ENCODE measurements at regions of chr1 and their contacts with region 1.

Region 1: GRCh38 chr1:46401964-46402626 is 8.0 kb downstream of the FAAH start:
- DNase-seq: peak; percentile 45 to 87
- ATAC-seq: peak; percentile 64 to 92 (median 82)
- H3K4me3 ChIP-seq: peak overlapping the region; percentile 30
- H3K27ac ChIP-seq: peak overlapping the region; percentile 60
- H3K4me1 ChIP-seq: peaks cover 29% of the 10 kb centered on the region
- H3K27me3 ChIP-seq: no peaks in the 10 kb centered on the region
- CTCF ChIP-seq: no peak

Region 2: DNA sequence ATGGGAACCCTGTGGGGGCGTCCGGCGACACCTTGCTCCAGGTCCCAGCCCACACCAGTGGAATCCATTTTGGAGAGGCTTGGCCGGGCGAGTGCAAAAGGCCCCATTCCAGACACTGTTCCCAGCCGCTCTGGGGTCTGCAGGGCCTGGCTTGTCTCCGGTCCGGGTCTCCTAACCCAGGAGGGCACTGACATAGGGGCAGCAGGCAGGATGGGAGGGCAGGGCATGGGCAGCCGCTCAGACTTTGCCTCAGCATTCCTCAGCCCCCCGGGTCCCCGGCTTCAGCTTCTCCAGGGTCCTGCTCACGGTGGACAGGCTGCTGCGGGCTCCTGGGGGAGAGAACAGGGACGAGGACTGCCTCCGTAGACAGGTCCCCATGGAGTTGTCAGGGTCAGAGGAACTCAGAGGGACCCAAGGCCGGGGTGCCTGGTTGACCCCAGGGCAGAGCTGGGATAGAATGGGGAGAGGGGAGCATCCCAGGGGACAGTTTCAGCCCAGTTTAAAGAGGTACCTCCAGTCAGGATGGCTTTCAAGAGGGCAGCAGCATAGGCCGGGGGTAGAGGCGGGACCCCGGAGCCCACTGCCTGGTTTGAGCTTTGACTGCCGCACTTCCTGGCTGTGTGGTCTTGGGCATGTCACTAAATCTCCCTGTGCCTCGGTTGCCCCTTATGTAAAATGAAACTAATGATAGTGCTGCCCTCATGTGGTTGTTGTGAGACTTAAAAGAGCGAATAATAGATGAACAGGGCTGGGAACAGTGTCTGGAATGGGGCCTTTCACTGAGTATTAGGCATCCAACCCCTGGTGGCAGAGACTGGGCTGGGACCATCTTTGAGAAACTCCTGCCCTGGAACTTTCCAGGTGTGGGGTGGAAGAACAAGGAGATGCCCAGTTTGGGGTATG is 145.6 kb after region 1 on chr1:
- intact Hi-C with region 1: loop called in 1 of 2 experiments (anchors 5 kb)
- DNase-seq: peak in 1 of 2 donors; percentile 41
- ATAC-seq: peak; percentile 31 to 72 (median 48)
- H3K4me3 ChIP-seq: no peak overlapping the region
- H3K27ac ChIP-seq: no peak overlapping the region
- H3K4me1 ChIP-seq: no peaks in the 10 kb centered on the region
- H3K27me3 ChIP-seq: peaks cover 0 to 29% (median 13%) of the 10 kb centered on the region in 3 donors
- CTCF ChIP-seq: peak; percentile 37

Region 3: DNA sequence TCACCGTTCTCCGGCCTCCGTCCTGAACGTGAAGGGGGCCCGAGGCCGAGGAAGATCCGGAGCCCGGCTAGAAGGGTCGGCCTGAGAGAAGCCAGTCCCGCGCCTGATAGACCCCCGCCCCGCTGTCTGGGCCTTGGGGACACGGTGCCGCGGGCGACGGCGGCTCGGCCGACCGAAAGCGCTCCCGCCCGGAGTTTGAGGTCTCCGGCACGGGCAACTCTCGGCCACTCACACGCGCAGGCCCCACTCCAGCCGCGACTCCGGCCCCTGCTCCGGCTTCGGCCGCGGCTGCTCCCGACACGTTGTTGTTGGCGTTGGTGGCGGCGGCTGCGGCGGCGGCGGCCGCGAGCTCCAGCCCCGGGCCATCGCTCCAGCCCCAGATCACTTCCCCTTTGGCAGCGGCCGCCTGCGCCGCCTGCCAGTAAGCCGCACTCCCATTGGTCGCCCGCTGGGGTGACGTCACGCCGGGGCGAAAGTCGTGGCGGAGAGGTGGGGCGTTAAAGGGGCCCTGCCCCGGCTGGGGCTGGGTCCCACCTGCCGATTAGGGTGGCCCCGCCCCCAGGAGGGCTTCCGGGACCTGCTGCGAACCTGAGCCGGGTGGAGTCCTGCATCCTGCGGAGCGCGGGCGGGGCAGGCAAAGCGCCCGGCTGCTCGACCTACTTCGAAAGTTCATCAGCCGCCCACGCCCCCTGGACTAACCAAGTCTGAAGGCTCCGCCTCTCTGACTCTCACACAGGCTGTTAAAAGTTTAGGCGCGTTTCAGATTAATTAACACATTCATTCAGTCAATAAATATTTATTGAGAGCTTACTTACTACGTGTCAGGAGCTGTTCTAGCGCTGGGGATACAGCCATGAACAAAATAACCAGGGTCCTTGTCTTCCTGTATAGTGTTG is 316.9 kb after region 1 on chr1 and contains the start of gene EFCAB14:
- intact Hi-C with region 1: loop called in 1 of 2 experiments (anchors 5 kb)
- DNase-seq: peak; percentile 96 to 98
- ATAC-seq: peak; percentile 99 to 100 (median 100)
- H3K4me3 ChIP-seq: peak within 1 kb of the TSS; percentile 100
- H3K27ac ChIP-seq: peak within 1 kb of the TSS; percentile 83
- H3K4me1 ChIP-seq: peaks cover 26% of the 10 kb centered on the region
- H3K27me3 ChIP-seq: no peaks in the 10 kb centered on the region
- CTCF ChIP-seq: no peak
- total RNA-seq, gene EFCAB14: 48.4 to 63.3 (median 52.9) TPM

Measured in psoas muscle (tissue), 8 donors.